ENCODE measurements at regions of chr1 and their contacts with region 1.

Region 1: GRCh38 chr1:153532769-153533599 is 2.8 kb downstream of the S100A6 start:
- DNase-seq: peak; percentile 87
- ATAC-seq: peak; percentile 14
- H3K4me3 Mint-ChIP-seq: peak overlapping the region; percentile 91
- H3K27ac Mint-ChIP-seq: peak overlapping the region; percentile 89
- H3K4me1 Mint-ChIP-seq: peaks cover 44% of the 10 kb centered on the region
- H3K27me3 Mint-ChIP-seq: no peaks in the 10 kb centered on the region

Region 2: DNA sequence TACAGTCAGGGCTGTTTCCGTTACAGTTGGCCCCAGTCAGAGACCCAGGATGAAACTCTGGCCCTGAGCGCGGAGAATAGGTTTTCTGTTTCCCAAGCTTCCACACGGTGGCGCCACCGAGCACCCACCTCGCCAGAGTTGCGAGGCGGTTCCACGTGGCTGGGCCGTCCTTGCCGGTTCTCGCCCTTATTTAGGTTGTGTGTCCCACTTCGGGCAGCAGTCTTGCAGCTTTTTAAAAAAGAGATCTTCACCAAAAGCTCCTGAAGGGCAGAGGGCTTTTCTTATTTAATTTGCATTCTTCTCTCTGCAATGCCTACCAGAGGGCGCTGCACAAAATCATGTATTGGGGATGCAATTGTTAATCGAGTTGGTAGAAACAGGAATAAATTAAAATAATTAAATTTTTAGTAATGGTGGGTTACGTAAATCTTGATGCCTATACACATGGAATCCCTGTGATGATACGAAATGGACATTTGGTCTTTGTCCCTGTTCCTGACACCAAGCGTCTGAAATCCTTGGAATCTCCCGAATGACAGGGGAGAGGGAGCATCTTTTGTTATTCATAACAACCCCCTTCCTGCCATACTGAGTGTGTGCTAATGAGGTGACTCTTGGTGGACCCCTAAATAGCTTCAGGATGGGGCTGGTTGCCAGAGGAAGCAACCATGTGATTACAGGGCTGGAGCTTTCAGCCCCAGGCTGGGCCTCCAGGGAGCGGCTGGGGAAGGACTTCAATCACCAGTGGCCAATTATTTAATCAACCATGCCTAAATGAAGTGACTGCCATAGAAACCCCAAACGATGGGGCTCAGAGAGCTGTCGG is 67.0 kb before region 1 on chr1:
- POLR2A ChIA-PET with region 1: no interaction called
- DNase-seq: peak; percentile 72
- ATAC-seq: peak; percentile 68
- H3K4me3 Mint-ChIP-seq: no peak overlapping the region
- H3K27ac Mint-ChIP-seq: no peak overlapping the region
- H3K4me1 Mint-ChIP-seq: peaks cover 7% of the 10 kb centered on the region
- H3K27me3 Mint-ChIP-seq: peaks cover 28% of the 10 kb centered on the region

Region 3: GRCh38 chr1:153494976-153495535 is 37.9 kb before region 1 on chr1:
- POLR2A ChIA-PET with region 1: no interaction called
- DNase-seq: peak; percentile 78
- ATAC-seq: no peak
- H3K4me3 Mint-ChIP-seq: no peak overlapping the region
- H3K27ac Mint-ChIP-seq: no peak overlapping the region
- H3K4me1 Mint-ChIP-seq: peaks cover 2% of the 10 kb centered on the region
- H3K27me3 Mint-ChIP-seq: peaks cover 37% of the 10 kb centered on the region

Region 4: GRCh38 chr1:153510984-153511410 is 22.0 kb before region 1 on chr1:
- POLR2A ChIA-PET with region 1: interaction called, 10 read pairs
- DNase-seq: peak; percentile 81
- ATAC-seq: peak; percentile 87
- H3K4me3 Mint-ChIP-seq: no peak overlapping the region
- H3K27ac Mint-ChIP-seq: no peak overlapping the region
- H3K4me1 Mint-ChIP-seq: peaks cover 14% of the 10 kb centered on the region
- H3K27me3 Mint-ChIP-seq: no peaks in the 10 kb centered on the region

Region 5: GRCh38 chr1:153520230-153520629 is 12.8 kb before region 1 on chr1:
- POLR2A ChIA-PET with region 1: interaction called, 21 read pairs
- DNase-seq: no peak
- ATAC-seq: no peak
- H3K4me3 Mint-ChIP-seq: no peak overlapping the region
- H3K27ac Mint-ChIP-seq: no peak overlapping the region
- H3K4me1 Mint-ChIP-seq: peaks cover 13% of the 10 kb centered on the region
- H3K27me3 Mint-ChIP-seq: no peaks in the 10 kb centered on the region

Region 6: DNA sequence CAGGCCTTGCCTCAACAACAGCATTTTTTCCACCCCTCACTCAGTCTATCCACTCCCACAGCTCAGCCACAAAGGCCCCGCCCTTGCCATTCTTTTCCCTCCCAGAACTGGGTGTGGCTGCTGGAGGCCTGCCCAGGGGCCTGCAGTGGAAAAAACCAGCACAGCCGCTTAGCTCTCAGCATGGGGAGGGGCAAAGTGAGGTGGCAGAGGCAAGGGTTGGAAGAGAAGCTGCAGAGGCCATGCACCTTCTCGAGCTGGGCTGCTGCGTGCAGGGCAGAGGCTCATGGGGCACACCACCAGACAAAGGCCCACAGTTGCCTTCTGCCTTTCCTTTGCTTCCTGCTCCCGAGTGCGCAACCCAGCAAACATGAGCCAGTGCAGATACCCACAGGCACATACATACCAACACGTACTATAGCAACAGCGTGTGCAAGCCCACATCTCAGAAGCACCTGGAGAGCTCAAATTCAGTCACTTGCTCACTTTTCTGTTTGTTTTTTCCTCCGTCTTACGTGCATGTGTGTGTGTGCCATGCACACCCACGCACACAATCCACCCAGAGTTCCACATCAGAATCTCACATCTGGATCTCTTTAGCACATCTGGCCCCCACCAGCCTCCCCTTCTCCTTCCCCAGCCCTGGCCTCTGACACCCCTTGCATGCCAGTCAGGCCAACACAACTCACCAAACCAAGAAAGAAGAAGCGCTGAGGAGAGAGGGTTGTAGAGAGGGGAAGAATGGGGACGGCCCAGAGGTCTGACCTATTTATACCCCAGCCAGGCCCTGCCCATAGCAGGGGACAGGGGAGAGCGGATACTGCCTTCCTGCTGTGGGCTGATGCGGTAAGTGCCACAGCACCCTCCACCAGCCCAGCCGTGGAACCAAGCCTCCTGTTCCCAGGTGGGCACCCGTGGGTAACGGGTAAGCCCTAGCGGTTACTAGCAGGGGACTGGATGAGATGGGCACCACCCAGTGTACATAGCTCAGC is 12.4 kb after region 1 on chr1 and contains the start of gene S100A4:
- POLR2A ChIA-PET with region 1: interaction called, 140 read pairs
- DNase-seq: peak; percentile 86
- ATAC-seq: peak; percentile 81
- H3K4me3 Mint-ChIP-seq: peak within 1 kb of the TSS; percentile 93
- H3K27ac Mint-ChIP-seq: peak within 1 kb of the TSS; percentile 96
- H3K4me1 Mint-ChIP-seq: peaks cover 58% of the 10 kb centered on the region
- H3K27me3 Mint-ChIP-seq: no peaks in the 10 kb centered on the region
- total RNA-seq, gene S100A4: 385 to 394 TPM

Region 7: DNA sequence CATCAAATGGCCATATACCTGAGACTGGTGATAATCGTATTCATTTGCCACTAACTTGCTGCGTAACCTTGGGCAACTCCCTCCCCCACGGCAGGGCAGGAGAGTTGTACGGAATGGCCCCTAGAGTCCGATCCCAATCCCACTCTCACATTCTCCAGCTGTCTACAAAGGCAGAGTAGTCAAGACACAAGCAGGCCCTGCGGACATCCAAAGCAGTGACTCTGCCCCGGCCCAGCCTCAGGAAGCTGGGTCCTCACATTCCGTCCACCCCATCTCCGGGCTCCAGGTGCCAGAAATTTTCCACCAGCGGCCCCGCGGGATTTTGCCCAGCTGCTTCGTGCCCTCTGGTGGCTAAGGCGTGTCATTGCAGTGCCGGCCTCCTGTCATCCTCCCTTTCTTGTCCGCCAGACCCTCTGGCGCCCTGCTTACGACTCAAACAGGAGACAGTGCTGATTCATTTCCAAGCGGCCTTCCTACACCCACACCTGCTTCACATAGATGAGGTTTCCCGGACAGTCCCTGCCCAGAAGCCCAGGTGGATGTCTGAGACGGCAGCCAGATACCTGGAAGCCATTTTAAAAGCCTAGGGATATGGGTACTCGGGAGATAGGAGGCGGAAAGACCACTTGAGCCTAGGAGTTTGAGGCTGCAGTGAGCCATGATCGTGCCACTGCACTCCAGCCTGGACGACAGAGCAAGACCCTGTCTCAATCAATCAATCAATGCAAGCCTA is 35.5 kb after region 1 on chr1:
- POLR2A ChIA-PET with region 1: interaction called, 68 read pairs
- DNase-seq: peak; percentile 82
- ATAC-seq: peak; percentile 31
- H3K4me3 Mint-ChIP-seq: peak overlapping the region; percentile 75
- H3K27ac Mint-ChIP-seq: peak overlapping the region; percentile 4
- H3K4me1 Mint-ChIP-seq: peaks cover 41% of the 10 kb centered on the region
- H3K27me3 Mint-ChIP-seq: peaks cover 10% of the 10 kb centered on the region